AG04450 (cell line): ENCODE measurements at regions of chr17 and their contacts with region 1.

Region 1: DNA sequence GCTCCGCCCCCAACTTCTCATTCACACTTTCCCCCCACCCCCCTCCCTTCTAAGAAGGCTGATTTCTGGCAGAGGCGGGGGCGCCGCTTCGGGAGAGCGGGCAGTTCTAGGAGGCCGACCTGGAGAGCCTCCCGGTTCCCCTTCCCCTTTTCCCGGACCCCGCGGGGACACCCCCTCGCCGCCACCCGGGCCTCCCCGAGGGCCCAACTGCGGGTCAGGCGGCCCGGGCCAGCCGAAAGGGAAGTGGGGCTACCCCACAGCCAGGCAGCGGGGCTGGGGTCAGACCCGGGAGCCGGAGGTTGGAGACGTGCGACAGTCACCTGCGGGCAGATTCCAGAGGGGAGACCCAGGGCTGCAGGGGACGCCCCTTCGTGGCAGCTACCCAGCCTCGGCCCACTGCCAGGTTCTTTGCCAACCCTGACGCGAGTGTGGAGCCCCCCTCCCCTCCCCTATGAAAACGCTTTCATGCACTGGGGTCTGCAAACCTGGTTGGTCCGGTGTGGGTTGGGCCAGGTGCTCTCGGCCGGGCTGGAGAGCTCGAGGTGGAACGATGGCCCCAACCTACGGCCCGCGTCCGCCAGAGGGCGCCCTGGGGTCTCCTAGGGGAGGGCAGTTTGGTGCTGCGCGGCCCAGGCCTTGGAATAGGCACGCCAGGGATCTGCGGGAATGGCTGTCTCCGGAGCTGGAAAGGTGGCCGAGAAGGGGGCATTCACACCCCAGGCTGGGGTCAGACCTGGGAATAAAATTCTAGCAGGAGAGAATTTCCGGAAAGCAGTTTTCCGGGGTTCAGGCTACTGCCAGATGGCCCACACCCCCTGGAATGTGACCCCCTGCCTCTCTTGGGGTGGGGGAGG is 721 bp upstream of the SOCS3 start:
- DNase-seq: peak; percentile 63
- H3K4me3 ChIP-seq: peak overlapping the region; percentile 59
- H3K27ac ChIP-seq: peak overlapping the region; percentile 73
- H3K27me3 ChIP-seq: no peaks in the 10 kb centered on the region
- CTCF ChIP-seq: peak; percentile 90

Region 2: GRCh38 chr17:77772461-77772897 is 588.1 kb before region 1 on chr17:
- CTCF ChIA-PET with region 1: no interaction called
- POLR2A ChIA-PET with region 1: no interaction called
- DNase-seq: no peak
- H3K4me3 ChIP-seq: no peak overlapping the region
- H3K27ac ChIP-seq: no peak overlapping the region
- H3K27me3 ChIP-seq: peaks cover 9% of the 10 kb centered on the region
- CTCF ChIP-seq: peak; percentile 43

Region 3: DNA sequence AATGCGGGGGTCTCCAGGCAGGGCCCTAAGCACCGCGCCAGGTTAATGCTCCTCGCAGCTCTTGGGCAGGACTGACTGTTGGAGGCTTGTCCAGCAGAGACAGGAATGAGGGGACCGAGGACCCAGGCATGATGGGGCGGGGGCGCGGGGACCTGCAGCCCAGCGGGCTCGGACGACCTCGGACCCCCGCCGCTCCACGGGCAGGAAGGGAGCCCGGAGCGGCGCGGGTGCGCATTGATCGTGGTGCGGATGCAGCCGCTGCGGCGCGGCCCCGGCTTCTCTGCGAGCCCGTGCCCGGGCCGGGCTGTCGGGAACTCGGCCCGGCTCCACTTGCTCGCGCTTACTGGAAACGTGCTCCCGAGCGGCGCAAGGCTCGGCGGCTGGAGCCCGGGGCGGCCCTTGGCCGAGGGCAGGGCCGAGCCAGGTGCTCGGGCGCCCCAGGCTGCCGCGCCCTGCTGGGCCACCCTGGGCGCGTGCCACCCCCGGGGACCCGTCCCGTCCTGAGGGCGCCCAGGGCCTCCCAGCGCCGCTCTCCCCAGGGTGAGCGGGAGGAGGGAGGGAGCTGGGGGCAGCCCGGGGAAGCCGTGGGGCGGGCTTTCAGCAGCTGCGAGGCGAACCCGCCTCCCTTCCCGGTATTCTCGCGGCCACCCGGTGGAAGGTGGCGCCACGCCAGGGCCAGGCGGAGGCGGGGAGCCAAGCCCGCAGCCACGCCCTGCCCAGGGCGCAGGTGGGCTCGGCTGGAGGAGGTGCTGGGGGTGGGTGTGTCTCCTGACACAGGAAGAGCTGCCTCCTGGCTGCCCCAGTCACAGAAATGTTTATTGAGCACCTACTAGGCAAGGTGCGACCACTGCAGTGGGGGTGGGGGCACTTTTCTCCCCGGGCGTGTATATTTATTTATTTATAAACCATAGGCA is 46.6 kb before region 1 on chr17:
- CTCF ChIA-PET with region 1: interaction called, 6 read pairs
- POLR2A ChIA-PET with region 1: interaction called, 32 read pairs
- DNase-seq: no peak
- H3K4me3 ChIP-seq: peak overlapping the region; percentile 44
- H3K27ac ChIP-seq: no peak overlapping the region
- H3K27me3 ChIP-seq: no peaks in the 10 kb centered on the region
- CTCF ChIP-seq: no peak

Region 4: GRCh38 chr17:78375401-78376151 is 15.0 kb after region 1 on chr17:
- CTCF ChIA-PET with region 1: interaction called, 28 read pairs
- POLR2A ChIA-PET with region 1: interaction called, 18 read pairs
- DNase-seq: peak; percentile 88
- H3K4me3 ChIP-seq: no peak overlapping the region
- H3K27ac ChIP-seq: peak overlapping the region; percentile 100
- H3K27me3 ChIP-seq: no peaks in the 10 kb centered on the region
- CTCF ChIP-seq: no peak

Region 5: DNA sequence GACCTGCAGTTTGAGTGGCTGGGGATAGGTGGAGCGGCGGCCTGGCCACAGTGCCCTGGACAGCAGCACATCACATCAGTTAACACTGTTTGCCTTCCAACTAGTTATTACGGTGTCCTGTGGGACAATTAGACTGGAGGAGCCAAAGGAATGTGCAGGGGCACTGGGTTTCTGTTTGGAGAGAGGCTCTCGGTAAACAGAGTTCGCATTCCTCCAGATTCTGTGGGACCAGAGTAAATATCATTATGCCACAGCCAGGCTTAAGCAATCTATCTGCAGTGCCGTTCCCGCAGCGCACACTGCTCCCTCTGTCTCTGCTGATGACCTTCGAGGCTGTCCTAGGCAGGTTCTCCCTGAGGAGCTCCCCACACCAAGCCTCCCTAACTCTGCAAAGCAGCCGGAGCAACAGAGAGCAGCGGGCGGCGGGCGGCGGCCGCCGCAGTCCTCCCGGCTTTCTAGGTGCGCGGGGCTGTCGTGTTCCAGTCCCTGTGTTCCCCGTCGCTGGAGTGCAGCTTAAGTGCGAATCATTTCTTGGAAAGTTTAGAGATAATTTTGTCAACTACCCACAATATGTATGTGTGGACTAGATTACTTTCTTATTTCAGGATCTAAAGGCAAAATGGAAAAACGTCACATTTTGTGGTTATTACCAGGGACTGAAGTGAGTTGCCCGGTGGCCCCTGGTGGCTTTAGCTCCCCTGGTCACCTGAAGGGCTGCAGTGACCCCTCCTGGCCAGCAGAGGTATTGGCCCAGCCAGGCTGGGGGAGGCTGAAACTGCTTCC is 61.1 kb after region 1 on chr17:
- CTCF ChIA-PET with region 1: interaction called, 58 read pairs
- POLR2A ChIA-PET with region 1: interaction called, 5 read pairs
- DNase-seq: peak; percentile 32
- H3K4me3 ChIP-seq: no peak overlapping the region
- H3K27ac ChIP-seq: no peak overlapping the region
- H3K27me3 ChIP-seq: no peaks in the 10 kb centered on the region
- CTCF ChIP-seq: peak; percentile 99